PC-9 (cell line): ENCODE measurements at regions of chr12 and their contacts with region 1.

Region 1: DNA sequence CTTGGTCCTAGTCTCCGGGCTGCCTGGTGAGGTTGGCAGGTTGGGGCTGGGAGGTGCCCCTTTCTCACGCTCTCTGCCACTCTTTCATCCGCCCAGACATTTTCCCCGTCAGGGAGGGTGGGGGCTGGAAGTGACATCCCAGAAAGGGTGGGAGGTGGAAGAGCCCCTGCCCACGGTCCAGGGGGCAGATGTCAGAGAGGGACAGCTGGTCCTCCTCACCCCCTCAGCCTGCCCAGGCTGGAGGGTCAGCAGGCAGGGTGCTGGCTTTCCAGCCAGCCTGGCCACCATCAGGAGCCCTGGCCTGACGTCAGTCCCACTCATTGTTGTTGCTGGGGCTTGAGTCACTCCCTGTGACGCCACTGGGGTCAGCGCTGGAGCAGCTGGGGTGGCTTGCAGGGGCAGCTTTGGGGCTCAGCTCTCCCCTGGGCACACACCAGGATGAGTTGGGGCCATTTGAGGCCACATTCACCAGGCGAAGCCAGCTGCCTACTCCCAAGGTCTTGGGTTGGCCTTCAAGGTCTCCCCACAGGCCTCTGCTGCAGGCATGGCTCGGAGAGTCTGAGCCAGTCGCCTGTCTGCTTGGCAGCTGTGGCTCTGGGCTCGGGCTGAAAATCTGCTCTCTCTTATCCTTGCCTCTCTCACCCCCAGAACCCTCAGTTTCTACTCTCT is 5.7 kb upstream of the ATG101 start:
- DNase-seq: peak in 1 of 2 experiments; percentile 52
- H3K4me3 ChIP-seq: no peak overlapping the region
- H3K27ac ChIP-seq: no peak overlapping the region
- H3K4me1 ChIP-seq: 0 out of 2 replicates have a peak, but pooled peaks cover 1% of the 10 kb centered on the region
- H3K27me3 ChIP-seq: peaks cover 6% of the 10 kb centered on the region; the same call in 1 of the 2 replicates
- CTCF ChIP-seq: no peak

Region 2: DNA sequence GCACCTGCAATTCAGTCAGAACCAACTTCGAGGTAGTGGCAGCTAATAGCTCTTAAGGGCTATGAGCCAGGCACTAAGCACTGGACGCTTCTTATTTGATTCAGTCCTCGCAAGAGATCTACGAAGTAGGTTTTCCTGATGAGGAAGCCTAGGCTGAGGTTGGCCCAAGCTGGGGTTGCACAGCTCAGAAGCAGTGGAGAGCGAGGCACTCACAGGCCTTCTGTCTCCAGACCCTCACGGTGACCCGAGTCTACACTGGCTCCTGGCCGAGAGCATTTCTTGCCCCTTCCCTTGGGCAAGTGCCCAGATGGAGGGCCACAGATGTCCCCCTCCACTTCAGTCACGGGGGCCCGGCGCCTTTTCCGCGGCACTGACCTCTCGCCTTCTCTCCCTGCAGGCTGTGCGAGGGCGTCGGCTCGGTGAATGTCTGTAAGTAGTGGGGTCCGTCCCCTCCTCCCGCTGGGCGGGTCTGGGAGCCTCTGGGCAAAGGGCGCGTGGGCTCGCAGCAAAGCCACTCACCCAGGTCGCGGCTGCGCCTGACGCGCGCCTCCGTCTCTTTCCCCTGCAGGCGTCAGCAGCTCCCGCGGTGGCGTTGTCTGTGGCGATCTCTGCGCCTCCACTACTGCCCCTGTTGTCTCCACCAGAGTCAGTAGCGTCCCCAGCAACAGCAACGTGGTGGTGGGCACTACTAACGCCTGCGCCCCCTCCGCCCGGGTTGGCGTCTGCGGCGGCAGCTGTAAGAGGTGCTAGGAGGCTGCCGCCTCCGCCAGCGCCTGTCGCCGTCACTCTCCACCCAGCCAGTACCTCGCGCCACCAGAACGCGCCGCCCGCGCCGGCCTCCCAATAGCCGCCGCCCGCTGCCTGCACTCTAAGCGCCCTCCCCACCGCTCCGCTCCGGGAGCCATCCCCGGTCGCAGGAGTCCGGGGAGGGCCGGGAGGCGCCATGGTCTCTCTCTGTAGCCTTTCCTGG is 244.0 kb after region 1 on chr12:
- CTCF ChIA-PET with region 1: no interaction called
- POLR2A ChIA-PET with region 1: no interaction called
- intact Hi-C with region 1: no loop called
- DNase-seq: peak; percentile 49 to 75
- H3K4me3 ChIP-seq: peak overlapping the region; percentile 71
- H3K27ac ChIP-seq: no peak overlapping the region
- H3K4me1 ChIP-seq: peaks cover 19% of the 10 kb centered on the region
- H3K27me3 ChIP-seq: no peaks in the 10 kb centered on the region
- CTCF ChIP-seq: no peak

Region 3: GRCh38 chr12:52845946-52846345 is 781.8 kb after region 1 on chr12:
- CTCF ChIA-PET with region 1: no interaction called
- POLR2A ChIA-PET with region 1: interaction called, 14 read pairs
- intact Hi-C with region 1: no loop called
- DNase-seq: no peak
- H3K4me3 ChIP-seq: no peak overlapping the region
- H3K27ac ChIP-seq: no peak overlapping the region
- H3K4me1 ChIP-seq: peaks cover 34% of the 10 kb centered on the region
- H3K27me3 ChIP-seq: no peaks in the 10 kb centered on the region
- CTCF ChIP-seq: no peak